Activated T-helper 2 cell treated with anti-CD3 and anti-CD28 coated beads, Interferon-gamma antibody, Interleukin-2, Interleukin-4, amounts not matched to agents 10 μg/mL and 5 μg/mL and 100 μg/mL, durations not matched to agents 14 hours and 24 hours and 36 hours (primary cell): ENCODE measurements at regions of chrX and their contacts with region 1.

Region 1: GRCh38 chrX:20128670-20129069 is 12.0 kb upstream of the MAP7D2 start:
- DNase-seq: no peak
- H3K4me3 Mint-ChIP-seq: no peak overlapping the region
- H3K27ac Mint-ChIP-seq: no peak overlapping the region
- H3K4me1 Mint-ChIP-seq: no peaks in the 10 kb centered on the region
- H3K27me3 Mint-ChIP-seq: no peaks in the 10 kb centered on the region

Region 2: GRCh38 chrX:19904778-19905367 is 223.8 kb before region 1 on chrX:
- intact Hi-C with region 1: loop called (anchors 10 kb)
- DNase-seq: no peak
- H3K4me3 Mint-ChIP-seq: no peak overlapping the region
- H3K27ac Mint-ChIP-seq: no peak overlapping the region
- H3K4me1 Mint-ChIP-seq: peaks cover 14% of the 10 kb centered on the region
- H3K27me3 Mint-ChIP-seq: no peaks in the 10 kb centered on the region

Region 3: DNA sequence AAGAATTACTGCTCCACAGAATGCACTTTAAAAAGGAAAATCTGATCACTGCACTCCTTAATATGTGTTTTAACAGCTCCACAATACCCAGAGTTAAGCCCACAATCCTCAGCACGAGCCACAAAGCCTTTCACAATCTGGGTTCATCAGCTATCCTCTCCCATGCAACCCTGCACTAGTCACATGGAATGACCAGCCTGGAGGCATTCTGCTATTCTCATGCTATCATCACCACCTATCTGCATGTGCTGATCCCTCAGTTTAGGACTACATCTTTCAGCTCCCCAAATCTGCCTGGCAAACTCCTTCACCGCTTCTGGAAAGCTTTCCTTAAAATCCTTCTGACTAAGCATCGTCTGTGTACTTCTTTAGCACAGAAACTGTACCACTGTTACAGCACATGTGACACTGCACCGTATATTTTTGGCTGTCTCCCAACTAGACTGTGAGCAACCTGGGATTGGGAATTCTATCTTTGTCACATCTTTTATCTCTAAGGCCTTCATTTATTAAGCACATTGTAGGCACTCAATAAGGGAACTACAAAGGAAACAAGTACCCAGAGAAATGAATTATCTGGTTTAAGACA is 31.2 kb after region 1 on chrX:
- intact Hi-C with region 1: no loop called
- DNase-seq: no peak
- H3K4me3 Mint-ChIP-seq: no peak overlapping the region
- H3K27ac Mint-ChIP-seq: no peak overlapping the region
- H3K4me1 Mint-ChIP-seq: no peaks in the 10 kb centered on the region
- H3K27me3 Mint-ChIP-seq: no peaks in the 10 kb centered on the region